ENCODE measurements at regions of chr15 and their contacts with region 1.

Region 1: GRCh38 chr15:52834379-52834778 is 44.2 kb upstream of the ONECUT1 start:
- DNase-seq: no peak
- ATAC-seq: no peak
- H3K4me3 ChIP-seq: no peak overlapping the region
- H3K4me1 ChIP-seq: no peaks in the 10 kb centered on the region
- CTCF ChIP-seq: no peak

Region 2: GRCh38 chr15:52893338-52893737 is 59.0 kb after region 1 on chr15:
- intact Hi-C with region 1: loop called in 1 of 2 experiments (anchors 10 kb)
- DNase-seq: no peak
- ATAC-seq: no peak
- H3K4me3 ChIP-seq: no peak overlapping the region
- H3K4me1 ChIP-seq: no peaks in the 10 kb centered on the region
- CTCF ChIP-seq: no peak